Activated naive CD4-positive, alpha-beta T cell treated with anti-CD3 and anti-CD28 coated beads, Interleukin-2, amount 10 ng/mL, durations not matched to agents 7 days and 5 days (primary cell): ENCODE measurements at regions of chr10 and their contacts with region 1.

Region 1: GRCh38 chr10:73879296-73880173 is 5.2 kb upstream of the CAMK2G start:
- DNase-seq: peak; percentile 96
- H3K4me3 Mint-ChIP-seq: no peak overlapping the region
- H3K27ac Mint-ChIP-seq: peak overlapping the region; percentile 76
- H3K4me1 Mint-ChIP-seq: peaks cover 47% of the 10 kb centered on the region
- H3K27me3 Mint-ChIP-seq: peaks cover 14% of the 10 kb centered on the region

Region 2: DNA sequence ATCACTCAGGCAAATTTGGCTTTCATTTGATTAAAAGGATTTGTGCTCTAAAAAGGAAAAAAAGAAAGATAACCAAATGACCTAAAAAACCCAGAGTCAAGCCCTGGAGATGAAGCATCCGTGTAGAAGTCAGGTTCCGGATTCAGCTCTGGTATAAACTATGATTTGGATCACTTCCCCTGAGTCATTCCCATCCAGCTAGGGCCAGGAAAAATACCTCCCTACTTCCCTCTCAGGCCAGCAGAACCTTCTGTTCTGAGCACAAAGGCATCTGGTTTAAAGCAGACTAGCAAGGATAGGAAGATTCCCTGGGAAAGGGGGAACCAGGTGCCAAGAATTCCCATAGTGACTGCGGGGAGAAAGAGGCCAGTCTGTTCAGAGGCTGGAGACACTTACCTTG is 42.5 kb before region 1 on chr10:
- CTCF ChIA-PET with region 1: interaction called, 24 read pairs
- DNase-seq: no peak
- H3K4me3 Mint-ChIP-seq: no peak overlapping the region
- H3K27ac Mint-ChIP-seq: peak overlapping the region; percentile 42
- H3K4me1 Mint-ChIP-seq: no peaks in the 10 kb centered on the region
- H3K27me3 Mint-ChIP-seq: no peaks in the 10 kb centered on the region

Region 3: GRCh38 chr10:73848821-73849489 is 30.6 kb before region 1 on chr10:
- CTCF ChIA-PET with region 1: interaction called, 406 read pairs
- DNase-seq: peak; percentile 95
- H3K4me3 Mint-ChIP-seq: no peak overlapping the region
- H3K27ac Mint-ChIP-seq: peak overlapping the region; percentile 80
- H3K4me1 Mint-ChIP-seq: peaks cover 21% of the 10 kb centered on the region
- H3K27me3 Mint-ChIP-seq: no peaks in the 10 kb centered on the region

Region 4: DNA sequence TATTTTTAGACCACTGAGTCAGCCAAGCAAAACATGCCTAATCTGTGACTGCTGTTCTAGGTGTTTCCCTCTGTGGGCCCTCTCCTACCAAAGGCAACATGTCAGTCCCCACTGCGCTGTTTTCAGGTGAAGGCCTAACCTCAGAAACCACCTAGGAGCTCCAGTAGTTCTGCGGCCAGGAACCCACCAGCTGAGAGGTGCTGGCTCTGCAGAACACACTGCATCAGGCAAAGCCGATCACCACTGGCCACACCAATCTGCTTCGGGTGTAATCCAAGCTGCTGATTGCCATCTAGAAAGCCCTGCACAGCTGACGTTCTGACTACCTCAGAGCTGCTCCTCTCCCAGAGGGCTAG is 20.1 kb before region 1 on chr10:
- CTCF ChIA-PET with region 1: interaction called, 406 read pairs
- DNase-seq: peak; percentile 66
- H3K4me3 Mint-ChIP-seq: no peak overlapping the region
- H3K27ac Mint-ChIP-seq: peak overlapping the region; percentile 89
- H3K4me1 Mint-ChIP-seq: peaks cover 82% of the 10 kb centered on the region
- H3K27me3 Mint-ChIP-seq: no peaks in the 10 kb centered on the region

Region 5: GRCh38 chr10:73865459-73866442 is 13.8 kb before region 1 on chr10:
- CTCF ChIA-PET with region 1: interaction called, 28 read pairs
- DNase-seq: peak; percentile 74
- H3K4me3 Mint-ChIP-seq: peak overlapping the region; percentile 80
- H3K27ac Mint-ChIP-seq: peak overlapping the region; percentile 96
- H3K4me1 Mint-ChIP-seq: peaks cover 85% of the 10 kb centered on the region
- H3K27me3 Mint-ChIP-seq: no peaks in the 10 kb centered on the region

Region 6: GRCh38 chr10:73911553-73912004 is 32.0 kb after region 1 on chr10:
- CTCF ChIA-PET with region 1: no interaction called
- DNase-seq: no peak
- H3K4me3 Mint-ChIP-seq: peak overlapping the region; percentile 86
- H3K27ac Mint-ChIP-seq: no peak overlapping the region
- H3K4me1 Mint-ChIP-seq: peaks cover 46% of the 10 kb centered on the region
- H3K27me3 Mint-ChIP-seq: peaks cover 96% of the 10 kb centered on the region

Region 7: DNA sequence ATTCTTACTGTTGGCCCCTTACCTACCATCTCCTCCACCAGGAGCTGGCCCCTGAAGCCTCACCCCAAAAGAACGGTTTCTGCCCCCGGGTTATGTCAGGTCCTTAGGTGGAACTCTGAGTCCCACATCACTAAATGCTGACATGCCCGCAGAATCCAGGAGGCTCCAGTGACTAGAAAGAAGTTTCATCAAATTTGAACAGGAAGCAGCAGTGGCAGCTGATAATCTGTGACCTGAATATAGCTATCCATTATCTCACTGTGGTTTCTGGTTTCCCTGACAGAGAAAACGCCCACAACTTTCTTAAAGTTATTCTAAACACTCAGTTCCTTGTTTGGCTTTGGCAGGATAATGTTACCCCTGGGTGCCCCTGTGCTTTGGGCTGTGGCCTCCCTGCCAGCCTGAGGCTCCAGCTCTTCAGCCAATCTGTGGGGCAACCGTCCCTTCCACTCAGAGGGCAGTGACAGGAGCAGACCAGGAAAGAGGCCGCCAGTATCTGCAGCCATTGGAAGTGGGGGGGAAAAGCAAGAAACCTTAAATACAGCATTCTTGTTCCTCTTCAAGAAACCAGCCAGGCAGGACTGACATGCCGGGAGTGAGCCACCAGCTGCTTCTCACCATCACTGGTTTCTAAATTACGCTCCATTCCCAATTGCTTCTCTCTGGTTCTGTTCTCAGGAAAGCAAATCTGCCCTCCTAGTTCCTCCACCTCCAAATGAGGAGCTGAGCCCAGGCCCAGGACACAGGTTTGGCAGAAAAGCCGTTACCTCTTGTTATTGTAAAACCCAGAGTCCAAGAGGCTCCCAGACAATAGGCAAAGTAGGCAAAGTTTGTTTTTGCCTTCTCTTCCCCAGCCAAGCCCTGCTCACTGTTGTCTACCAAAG is 77.2 kb after region 1 on chr10:
- CTCF ChIA-PET with region 1: interaction called, 10 read pairs
- DNase-seq: peak; percentile 57
- H3K4me3 Mint-ChIP-seq: peak overlapping the region; percentile 61
- H3K27ac Mint-ChIP-seq: peak overlapping the region; percentile 98
- H3K4me1 Mint-ChIP-seq: peaks cover 65% of the 10 kb centered on the region
- H3K27me3 Mint-ChIP-seq: no peaks in the 10 kb centered on the region